Left colon (tissue), 2 donors: ENCODE measurements at regions of chr13 and their contacts with region 1.

Region 1: GRCh38 chr13:28636674-28637317 is 22.1 kb upstream of the POMP start:
- DNase-seq: peak; percentile 30 to 57
- ATAC-seq: peak; percentile 96

Region 2: DNA sequence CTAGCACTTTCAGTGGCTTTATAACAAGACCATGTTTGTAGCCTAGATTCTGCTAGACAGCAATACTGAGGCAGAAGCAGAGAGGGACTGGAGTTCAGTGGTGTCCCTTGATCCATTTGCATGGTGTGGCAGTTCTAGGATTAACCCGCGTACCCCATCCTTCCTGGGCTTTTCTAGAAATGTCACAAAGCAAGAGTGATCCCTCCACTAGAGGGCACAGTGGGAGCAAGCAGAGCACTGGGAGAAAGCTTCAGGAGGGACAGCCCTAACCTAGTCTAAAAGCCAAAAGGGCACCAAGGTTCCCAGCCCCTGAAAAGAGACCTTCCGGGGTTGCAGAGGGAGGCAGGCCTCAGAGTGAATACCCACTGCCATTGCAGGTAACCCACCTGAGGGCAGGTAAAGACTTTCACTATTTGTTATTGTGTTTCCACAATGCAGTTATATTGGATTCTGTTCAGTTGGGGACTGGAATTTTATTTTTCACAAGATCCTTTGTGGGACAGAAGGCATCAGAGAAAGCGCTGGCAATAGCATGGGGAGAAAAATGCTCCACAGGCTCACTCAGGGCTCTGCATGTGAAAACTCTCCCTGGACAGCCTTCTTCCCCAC is 312.5 kb before region 1 on chr13:
- intact Hi-C with region 1: loop called in 1 of 2 experiments (anchors 5 kb)
- DNase-seq: peak; percentile 34 to 59
- ATAC-seq: peak; percentile 71